Aorta (tissue), 5 donors: ENCODE measurements at regions of chr3 and their contacts with region 1.

Region 1: GRCh38 chr3:187101184-187102072 is 37.9 kb downstream of the RPL39L start:
- DNase-seq: peak; percentile 92
- ATAC-seq: peak; percentile 82
- H3K4me3 ChIP-seq: peak overlapping the region in 1 of 2 donors; percentile 32
- H3K27ac ChIP-seq: peak overlapping the region; percentile 73 to 91
- H3K4me1 ChIP-seq: peaks cover 10 to 12% of the 10 kb centered on the region in 2 donors
- H3K27me3 ChIP-seq: no peaks in the 10 kb centered on the region

Region 2: GRCh38 chr3:186176511-186176943 is 924.9 kb before region 1 on chr3:
- intact Hi-C with region 1: no loop called
- DNase-seq: no peak
- ATAC-seq: no peak
- H3K4me3 ChIP-seq: no peak overlapping the region
- H3K27ac ChIP-seq: no peak overlapping the region
- H3K4me1 ChIP-seq: no peaks in the 10 kb centered on the region
- H3K27me3 ChIP-seq: no peaks in the 10 kb centered on the region

Region 3: DNA sequence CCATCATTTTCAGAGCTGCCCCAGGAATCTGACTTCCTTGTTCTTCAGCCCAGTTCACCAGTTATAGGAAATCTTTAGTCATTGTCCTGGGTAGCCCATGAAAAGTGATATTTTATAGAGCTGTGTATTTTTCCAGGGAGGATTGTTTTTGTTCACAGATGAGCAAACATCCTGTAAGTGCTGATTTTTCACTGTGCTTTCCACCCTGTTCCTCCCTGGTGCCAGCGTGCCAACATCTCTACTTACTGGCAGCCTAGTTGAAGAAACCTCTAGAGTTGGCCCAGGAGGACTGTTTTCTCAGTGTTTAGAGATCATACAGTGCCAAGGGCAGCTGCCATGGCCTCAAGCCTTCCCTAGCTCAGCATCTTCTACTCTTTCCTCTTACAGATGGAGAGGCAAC is 129.8 kb before region 1 on chr3:
- intact Hi-C with region 1: loop called (anchors 5 to 10 kb)
- DNase-seq: peak in 1 of 2 donors; percentile 85
- ATAC-seq: peak; percentile 85
- H3K4me3 ChIP-seq: no peak overlapping the region
- H3K27ac ChIP-seq: peak overlapping the region; percentile 92 to 96
- H3K4me1 ChIP-seq: peaks cover 4 to 5% of the 10 kb centered on the region in 2 donors
- H3K27me3 ChIP-seq: no peaks in the 10 kb centered on the region

Region 4: DNA sequence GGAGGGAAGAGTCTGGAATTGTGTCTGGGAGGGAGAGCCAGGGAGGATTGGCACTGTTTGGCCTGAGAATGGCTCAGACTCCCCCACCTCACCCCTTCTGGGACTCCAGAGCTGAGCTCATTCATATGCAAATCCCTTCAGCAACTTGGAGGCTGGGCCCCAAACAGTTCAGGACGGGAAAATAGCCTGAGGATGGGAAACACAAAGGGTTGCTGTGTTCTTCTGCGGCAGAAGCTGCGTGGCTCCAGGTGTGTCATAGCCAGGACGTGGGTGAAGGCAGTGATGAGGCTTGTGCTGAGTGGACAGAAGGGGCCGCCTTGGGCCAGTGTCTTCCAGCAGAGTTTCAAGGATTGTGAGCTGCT is 173.5 kb after region 1 on chr3:
- intact Hi-C with region 1: no loop called
- DNase-seq: no peak
- ATAC-seq: peak; percentile 37
- H3K4me3 ChIP-seq: no peak overlapping the region
- H3K27ac ChIP-seq: no peak overlapping the region
- H3K4me1 ChIP-seq: no peaks in the 10 kb centered on the region
- H3K27me3 ChIP-seq: no peaks in the 10 kb centered on the region